Natural killer cell (primary cell): ENCODE measurements at regions of chr5 and their contacts with region 1.

Region 1: DNA sequence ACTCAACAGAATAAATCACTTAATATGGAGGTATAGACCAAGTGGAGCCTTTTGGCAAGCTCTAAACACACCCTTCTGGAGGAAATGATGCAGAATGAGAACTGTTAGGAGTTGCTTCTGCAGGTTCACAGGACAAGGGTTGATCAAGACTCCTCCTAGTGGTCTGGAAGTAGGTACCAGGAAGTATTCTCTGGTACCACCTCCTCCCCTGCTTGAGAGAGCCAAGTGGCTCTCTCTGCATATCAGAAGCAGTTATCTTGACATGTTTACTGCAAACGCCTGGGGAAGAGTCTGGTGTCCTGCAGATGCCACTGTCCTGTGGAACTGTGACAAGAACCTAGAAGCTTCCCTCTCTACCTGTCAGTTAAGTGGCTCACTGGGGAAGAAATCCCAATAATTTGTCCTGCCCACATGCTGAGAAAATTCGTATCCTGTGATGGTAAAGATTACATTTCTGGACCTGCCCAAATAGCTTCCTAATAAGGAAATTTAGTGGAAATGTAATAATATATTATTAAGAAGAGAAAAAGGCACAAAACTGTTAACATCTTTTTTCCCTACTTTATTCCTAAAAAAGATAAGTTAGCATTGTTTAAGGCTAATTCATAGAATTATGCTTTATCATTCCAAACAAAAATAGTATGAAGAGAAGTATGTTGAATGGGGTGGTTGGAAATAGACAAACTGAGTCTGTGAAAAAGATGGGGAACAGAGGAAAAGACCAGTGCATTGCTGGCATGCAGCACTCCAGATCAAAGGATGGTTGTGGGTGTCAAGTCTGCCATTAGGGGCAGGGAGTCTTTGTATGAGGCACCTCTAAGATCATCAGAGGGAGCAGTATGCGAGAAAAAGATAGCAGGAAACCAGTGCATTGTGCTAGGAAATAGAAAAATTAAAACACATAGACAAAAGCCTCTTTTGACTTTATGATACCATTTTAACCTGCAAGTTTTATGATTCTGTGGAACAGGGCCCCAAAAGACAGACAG is 118.8 kb downstream of the CDC42SE2 start:
- DNase-seq: peak; percentile 30 to 90
- ATAC-seq: peak; percentile 68 to 89 (median 78)
- H3K4me3 ChIP-seq: no peak overlapping the region
- H3K4me3 Mint-ChIP-seq: peak overlapping the region; percentile 60
- H3K27ac ChIP-seq: peak overlapping the region; percentile 99
- H3K27ac Mint-ChIP-seq: peak overlapping the region; percentile 89 to 95
- H3K4me1 ChIP-seq: peaks cover 46% of the 10 kb centered on the region
- H3K4me1 Mint-ChIP-seq: peaks cover 65 to 66% of the 10 kb centered on the region in 2 donors
- H3K27me3 ChIP-seq: no peaks in the 10 kb centered on the region
- H3K27me3 Mint-ChIP-seq: no peaks in the 10 kb centered on the region
- CTCF ChIP-seq: peak; percentile 74

Region 2: DNA sequence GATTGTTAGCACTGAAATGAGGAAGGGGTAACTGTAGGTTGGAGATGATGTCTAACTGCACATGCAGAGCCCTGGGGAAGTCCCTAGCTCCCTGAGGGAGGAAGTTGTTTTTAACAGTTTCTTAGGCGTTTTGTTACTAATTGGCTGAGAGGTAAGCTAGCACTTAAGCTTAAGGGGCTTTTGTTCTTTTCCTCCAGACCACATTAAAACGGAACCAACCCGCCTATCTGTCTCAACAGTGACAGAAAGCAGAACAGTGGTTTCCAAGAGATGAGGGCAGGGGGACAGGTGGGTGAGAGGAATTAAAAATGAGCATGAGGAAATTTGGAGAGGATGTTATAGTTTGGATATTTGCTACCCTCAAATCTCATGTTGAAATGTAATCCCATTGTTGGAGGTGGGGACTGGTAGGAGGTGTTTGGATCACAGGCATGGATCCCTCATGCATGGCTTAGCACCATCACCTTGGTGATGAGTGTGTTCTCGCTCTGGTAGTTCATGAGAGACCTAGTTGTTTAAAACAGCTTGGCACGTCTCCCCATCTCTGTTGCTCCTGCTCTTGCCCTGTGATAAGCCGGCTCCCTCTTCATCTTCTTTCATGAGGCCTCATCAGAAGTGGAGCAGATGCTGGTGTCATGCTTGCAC is 173.1 kb before region 1 on chr5:
- intact Hi-C with region 1: loop called (anchors 1 kb)
- DNase-seq: peak; percentile 43 to 90
- ATAC-seq: peak; percentile 88 to 98 (median 97)
- H3K4me3 ChIP-seq: peak overlapping the region; percentile 5
- H3K4me3 Mint-ChIP-seq: peak overlapping the region; percentile 77
- H3K27ac ChIP-seq: peak overlapping the region; percentile 88
- H3K27ac Mint-ChIP-seq: peak overlapping the region; percentile 89 to 92
- H3K4me1 ChIP-seq: peaks cover 28% of the 10 kb centered on the region
- H3K4me1 Mint-ChIP-seq: peaks cover 31 to 36% of the 10 kb centered on the region in 2 donors
- H3K27me3 ChIP-seq: no peaks in the 10 kb centered on the region
- H3K27me3 Mint-ChIP-seq: no peaks in the 10 kb centered on the region
- CTCF ChIP-seq: no peak

Region 3: GRCh38 chr5:131224387-131225201 is 158.1 kb before region 1 on chr5:
- intact Hi-C with region 1: no loop called
- DNase-seq: peak in 1 of 2 donors; percentile 51
- ATAC-seq: peak; percentile 59 to 75 (median 68)
- H3K4me3 ChIP-seq: no peak overlapping the region
- H3K4me3 Mint-ChIP-seq: no peak overlapping the region
- H3K27ac ChIP-seq: peak overlapping the region; percentile 79
- H3K27ac Mint-ChIP-seq: no peak overlapping the region
- H3K4me1 ChIP-seq: peaks cover 19% of the 10 kb centered on the region
- H3K4me1 Mint-ChIP-seq: no peaks in the 10 kb centered on the region
- H3K27me3 ChIP-seq: no peaks in the 10 kb centered on the region
- H3K27me3 Mint-ChIP-seq: no peaks in the 10 kb centered on the region
- CTCF ChIP-seq: no peak

Region 4: DNA sequence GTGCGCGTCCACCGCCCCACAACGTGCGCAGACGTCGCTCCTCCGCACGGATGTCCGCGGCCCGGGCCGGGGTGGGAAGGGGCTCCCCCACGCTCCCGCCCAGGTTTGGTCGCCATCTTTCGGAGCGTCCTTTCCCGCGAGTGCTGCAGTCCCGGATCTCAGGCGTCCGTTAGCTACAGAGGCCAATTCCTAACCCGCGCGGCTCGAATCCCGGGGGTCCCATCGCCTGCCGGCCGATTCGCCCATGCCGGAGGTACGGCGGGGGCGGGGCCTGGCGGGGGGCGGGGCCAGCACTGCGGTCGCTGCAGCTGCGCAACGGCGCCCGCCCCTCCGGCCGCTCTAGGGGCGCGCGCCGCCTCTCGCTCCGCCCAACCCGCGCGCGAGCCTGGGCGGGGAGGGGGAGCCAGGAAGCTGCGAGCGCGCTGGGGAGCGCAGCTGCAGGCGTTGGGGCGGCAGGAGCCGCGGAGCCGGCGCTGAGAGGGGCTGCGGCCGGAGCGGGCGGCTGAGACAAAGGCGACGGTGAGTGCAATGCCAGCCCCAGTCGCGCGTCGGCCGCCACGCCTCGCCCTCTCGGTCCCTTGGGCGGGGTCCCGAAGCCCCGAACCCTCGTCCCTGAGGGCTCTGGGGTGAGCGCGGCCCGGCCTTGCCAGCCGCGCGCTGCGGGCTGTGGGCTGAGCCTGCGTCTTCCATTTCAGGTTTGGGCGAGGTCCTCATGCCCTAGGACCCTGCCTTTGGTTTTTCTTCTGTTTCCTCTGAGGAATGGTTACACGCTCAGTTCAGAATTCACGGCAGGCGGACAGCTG is 118.9 kb before region 1 on chr5 and contains the start of gene CDC42SE2:
- intact Hi-C with region 1: loop called (anchors 1 kb)
- DNase-seq: peak; percentile 90 to 95
- ATAC-seq: peak; percentile 84 to 97 (median 90)
- H3K4me3 ChIP-seq: peak within 1 kb of the TSS; percentile 95
- H3K4me3 Mint-ChIP-seq: peak within 1 kb of the TSS; percentile 95
- H3K27ac ChIP-seq: peak within 1 kb of the TSS; percentile 97
- H3K27ac Mint-ChIP-seq: peak within 1 kb of the TSS; percentile 76 to 95
- H3K4me1 ChIP-seq: peaks cover 33% of the 10 kb centered on the region
- H3K4me1 Mint-ChIP-seq: peaks cover 33 to 41% of the 10 kb centered on the region in 2 donors
- H3K27me3 ChIP-seq: no peaks in the 10 kb centered on the region
- H3K27me3 Mint-ChIP-seq: no peaks in the 10 kb centered on the region
- CTCF ChIP-seq: no peak
- total RNA-seq, gene CDC42SE2: 140 to 183 (median 166) TPM

Region 5: DNA sequence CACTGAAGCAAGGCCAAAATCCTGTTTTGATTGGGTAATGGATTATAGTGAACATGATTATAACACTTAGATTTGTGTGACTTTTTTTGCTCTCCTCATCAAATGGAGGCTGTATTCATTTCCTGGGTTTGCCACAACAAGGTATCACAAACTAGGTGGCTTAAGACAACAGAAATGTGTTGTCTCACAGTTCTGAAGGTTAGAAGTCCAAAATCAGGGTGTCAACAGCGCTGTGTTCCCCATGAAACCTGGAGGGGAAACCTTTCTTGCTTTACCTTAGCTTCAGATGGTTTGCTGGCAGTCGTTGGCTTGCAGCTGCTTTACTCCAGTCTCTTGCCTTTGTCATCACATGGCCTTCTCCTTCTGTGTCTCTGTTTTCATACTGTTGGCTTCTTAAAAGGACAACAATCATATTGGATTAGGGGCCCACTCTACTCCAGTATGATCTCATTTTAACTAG is 86.5 kb before region 1 on chr5:
- intact Hi-C with region 1: loop called (anchors 5 kb)
- DNase-seq: peak in 1 of 2 donors; percentile 64
- ATAC-seq: peak; percentile 80 to 87 (median 82)
- H3K4me3 ChIP-seq: no peak overlapping the region
- H3K4me3 Mint-ChIP-seq: peak overlapping the region; percentile 68
- H3K27ac ChIP-seq: peak overlapping the region; percentile 41
- H3K27ac Mint-ChIP-seq: peak overlapping the region; percentile 86 to 90
- H3K4me1 ChIP-seq: peaks cover 40% of the 10 kb centered on the region
- H3K4me1 Mint-ChIP-seq: peaks cover 54 to 59% of the 10 kb centered on the region in 2 donors
- H3K27me3 ChIP-seq: no peaks in the 10 kb centered on the region
- H3K27me3 Mint-ChIP-seq: no peaks in the 10 kb centered on the region
- CTCF ChIP-seq: no peak

Region 6: DNA sequence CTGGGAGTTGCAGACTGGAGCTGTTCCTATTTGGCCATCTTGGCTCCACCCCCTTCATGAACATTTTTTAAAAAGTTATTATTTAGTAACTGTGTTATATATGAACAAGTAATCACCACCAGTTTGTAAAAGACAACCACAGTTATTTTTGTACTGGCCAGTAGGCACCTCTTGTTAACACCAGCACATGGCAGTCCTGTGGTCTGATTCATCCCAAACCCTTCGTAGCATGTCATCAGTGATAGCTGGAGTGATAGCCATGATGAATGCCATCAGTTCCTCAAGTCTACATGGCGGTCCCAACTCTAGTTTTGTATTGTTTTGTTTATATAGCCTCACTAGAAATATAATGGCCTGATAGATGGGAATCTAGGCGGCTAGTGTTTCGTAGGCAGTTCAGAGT is 44.6 kb before region 1 on chr5:
- intact Hi-C with region 1: loop called (anchors 2 kb)
- DNase-seq: no peak
- ATAC-seq: peak in 2 of 3 donors; percentile 26 to 41
- H3K4me3 ChIP-seq: no peak overlapping the region
- H3K4me3 Mint-ChIP-seq: peak overlapping the region; percentile 78
- H3K27ac ChIP-seq: peak overlapping the region; percentile 57
- H3K27ac Mint-ChIP-seq: peak overlapping the region; percentile 67 to 90
- H3K4me1 ChIP-seq: peaks cover 31% of the 10 kb centered on the region
- H3K4me1 Mint-ChIP-seq: peaks cover 73 to 87% of the 10 kb centered on the region in 2 donors
- H3K27me3 ChIP-seq: no peaks in the 10 kb centered on the region
- H3K27me3 Mint-ChIP-seq: no peaks in the 10 kb centered on the region
- CTCF ChIP-seq: no peak

Region 7: GRCh38 chr5:131867524-131867923 is 484.8 kb after region 1 on chr5:
- intact Hi-C with region 1: no loop called
- DNase-seq: no peak
- ATAC-seq: no peak
- H3K4me3 ChIP-seq: no peak overlapping the region
- H3K4me3 Mint-ChIP-seq: no peak overlapping the region
- H3K27ac ChIP-seq: no peak overlapping the region
- H3K27ac Mint-ChIP-seq: no peak overlapping the region
- H3K4me1 ChIP-seq: no peaks in the 10 kb centered on the region
- H3K4me1 Mint-ChIP-seq: no peaks in the 10 kb centered on the region
- H3K27me3 ChIP-seq: no peaks in the 10 kb centered on the region
- H3K27me3 Mint-ChIP-seq: peaks cover 0 to 12% of the 10 kb centered on the region in 2 donors
- CTCF ChIP-seq: no peak